GM12878 (cell line): ENCODE measurements at regions of chrX and their contacts with region 1.

Region 1: GRCh38 chrX:15854712-15855567 is at the start of gene AP1S2:
- DNase-seq: peak; percentile 90
- ATAC-seq: peak; percentile 94
- H3K4me3 ChIP-seq: peak within 1 kb of the TSS; percentile 90
- H3K27ac ChIP-seq: peak within 1 kb of the TSS; percentile 90
- H3K4me1 ChIP-seq: 0 out of 2 replicates have a peak, but pooled peaks cover 3% of the 10 kb centered on the region
- H3K27me3 ChIP-seq: no peaks in the 10 kb centered on the region
- CTCF ChIP-seq: no peak
- EP300 ChIP-seq: no peak; a peak in 1 of 4 replicates
- POLR2A ChIP-seq: peak; percentile 62
- RAD21 ChIP-seq: no peak
- polyA plus RNA-seq, gene AP1S2: 25.6 to 36.6 TPM

Region 2: GRCh38 chrX:15825936-15826335 is 29.0 kb before region 1 on chrX:
- CTCF ChIA-PET with region 1: no interaction called
- POLR2A ChIA-PET with region 1: no interaction called
- RAD21 ChIA-PET with region 1: no interaction called
- SMC1A ChIA-PET with region 1: no interaction called
- in situ Hi-C with region 1: no loop called
- intact Hi-C with region 1: no loop called
- DNase-seq: no peak
- ATAC-seq: no peak
- H3K4me3 ChIP-seq: no peak overlapping the region
- H3K27ac ChIP-seq: no peak overlapping the region
- H3K4me1 ChIP-seq: no peaks in the 10 kb centered on the region
- H3K27me3 ChIP-seq: no peaks in the 10 kb centered on the region
- CTCF ChIP-seq: no peak
- EP300 ChIP-seq: no peak
- POLR2A ChIP-seq: no peak
- RAD21 ChIP-seq: no peak

Region 3: DNA sequence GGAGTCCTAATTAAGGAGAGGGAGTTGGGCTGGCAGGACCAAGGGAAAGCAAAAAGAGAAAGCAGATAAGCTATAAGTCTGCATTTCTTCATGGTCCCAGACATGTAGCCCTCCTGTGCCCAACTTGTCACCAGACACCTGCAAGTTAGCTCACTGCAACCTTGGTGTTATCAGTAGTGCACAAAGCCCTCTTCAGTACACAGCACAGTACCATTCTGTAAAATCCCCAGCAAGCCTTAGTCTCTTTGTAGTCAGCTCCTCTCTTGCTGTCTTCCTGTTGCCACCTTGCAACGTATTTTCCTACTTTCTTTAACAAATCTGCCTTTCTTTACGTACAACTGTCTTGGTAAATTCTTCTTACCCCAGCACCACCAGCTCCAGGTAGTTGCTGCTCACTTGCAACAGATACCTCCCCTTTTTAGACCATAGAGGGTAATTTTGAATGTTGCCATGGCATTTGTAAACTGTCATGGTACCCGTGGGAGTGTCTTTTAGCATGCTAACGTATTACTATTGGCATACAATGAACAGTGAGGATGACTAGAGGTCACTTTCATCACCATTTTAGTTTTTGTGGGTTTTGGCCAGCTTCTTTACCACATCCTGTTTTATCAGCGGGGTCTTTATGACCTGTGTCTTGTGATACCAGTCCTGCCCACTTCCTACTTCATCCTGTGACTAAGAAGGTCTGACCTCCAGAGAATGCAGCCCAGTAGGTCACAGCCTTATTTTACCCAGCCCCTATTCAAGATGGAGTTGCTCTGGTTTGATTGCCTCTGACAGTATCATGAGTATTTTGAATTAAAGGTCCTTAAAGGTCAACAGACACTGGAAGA is 28.0 kb after region 1 on chrX:
- CTCF ChIA-PET with region 1: interaction called, 3 read pairs
- POLR2A ChIA-PET with region 1: no interaction called
- RAD21 ChIA-PET with region 1: interaction called, 3 read pairs
- SMC1A ChIA-PET with region 1: interaction called, 3 read pairs
- in situ Hi-C with region 1: no loop called
- intact Hi-C with region 1: loop called (anchors 2 kb)
- DNase-seq: peak; percentile 64
- ATAC-seq: peak; percentile 96
- H3K4me3 ChIP-seq: no peak overlapping the region
- H3K27ac ChIP-seq: no peak overlapping the region; the same call in 1 of the 2 replicates
- H3K4me1 ChIP-seq: peaks cover 10% of the 10 kb centered on the region
- H3K27me3 ChIP-seq: no peaks in the 10 kb centered on the region
- CTCF ChIP-seq: no peak
- EP300 ChIP-seq: peak; percentile 42 to 48; a peak in 2 of 4 replicates
- POLR2A ChIP-seq: no peak
- RAD21 ChIP-seq: no peak

Region 4: DNA sequence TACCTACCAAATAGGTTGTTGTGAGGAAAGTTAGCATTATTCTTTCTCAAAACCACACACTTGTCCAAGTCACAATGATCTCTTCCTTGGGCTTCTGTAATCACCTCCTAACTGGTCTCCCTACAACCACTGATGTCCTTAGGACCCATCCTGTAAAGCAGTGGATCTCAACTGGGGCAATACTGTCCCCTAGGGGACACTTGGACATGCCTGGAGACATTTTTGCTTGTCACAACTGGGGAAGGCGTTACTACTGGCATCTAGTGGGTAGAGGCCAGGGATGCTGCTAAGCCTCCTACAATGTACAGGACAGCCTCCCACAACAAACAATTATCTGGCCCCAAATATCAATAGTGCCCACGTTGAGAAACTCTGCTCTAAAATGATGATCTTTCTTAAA is 118.4 kb after region 1 on chrX:
- CTCF ChIA-PET with region 1: interaction called, 40 read pairs
- POLR2A ChIA-PET with region 1: interaction called, 5 read pairs
- RAD21 ChIA-PET with region 1: interaction called, 34 read pairs
- SMC1A ChIA-PET with region 1: interaction called, 33 read pairs
- in situ Hi-C with region 1: no loop called
- intact Hi-C with region 1: no loop called
- DNase-seq: peak; percentile 26
- ATAC-seq: peak; percentile 98
- H3K4me3 ChIP-seq: no peak overlapping the region
- H3K27ac ChIP-seq: no peak overlapping the region
- H3K4me1 ChIP-seq: no peaks in the 10 kb centered on the region; the same call in 1 of the 2 replicates
- H3K27me3 ChIP-seq: no peaks in the 10 kb centered on the region
- CTCF ChIP-seq: peak; percentile 71 to 81 (median 79)
- EP300 ChIP-seq: no peak
- POLR2A ChIP-seq: no peak
- RAD21 ChIP-seq: peak; percentile 86

Region 5: DNA sequence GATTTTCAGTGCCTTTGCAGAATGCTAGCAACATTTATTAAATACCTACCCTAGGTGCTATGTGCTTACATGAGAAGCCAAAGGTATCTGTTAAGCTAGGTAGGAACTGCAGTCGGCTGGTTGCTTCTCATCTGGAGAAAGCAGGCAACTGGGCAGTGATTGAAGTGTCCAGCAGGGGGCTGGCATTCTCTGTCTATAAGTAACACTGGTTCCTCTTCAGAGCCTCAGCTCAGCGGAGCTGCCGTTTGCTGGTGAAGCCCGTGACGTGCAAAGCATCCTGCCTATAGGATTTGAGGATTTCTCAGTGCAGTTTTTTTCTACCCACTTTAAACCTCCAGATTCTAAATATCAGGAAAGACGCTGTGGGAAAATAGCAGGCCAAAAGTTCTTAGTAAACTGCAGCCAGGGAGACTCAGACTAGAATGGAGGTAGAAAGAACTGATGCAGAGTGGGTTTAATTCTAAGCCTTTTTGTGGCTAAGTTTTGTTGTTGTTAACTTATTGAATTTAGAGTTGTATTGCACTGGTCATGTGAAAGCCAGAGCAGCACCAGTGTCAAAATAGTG is 268.4 kb after region 1 on chrX and contains the start of gene GRPR:
- CTCF ChIA-PET with region 1: interaction called, 7 read pairs
- POLR2A ChIA-PET with region 1: no interaction called
- RAD21 ChIA-PET with region 1: interaction called, 12 read pairs
- SMC1A ChIA-PET with region 1: interaction called, 3 read pairs
- in situ Hi-C with region 1: no loop called
- intact Hi-C with region 1: loop called (anchors 1 kb)
- DNase-seq: no peak
- ATAC-seq: peak; percentile 88
- H3K4me3 ChIP-seq: no peak within 1 kb of the TSS
- H3K27ac ChIP-seq: no peak within 1 kb of the TSS
- H3K4me1 ChIP-seq: peaks cover 15% of the 10 kb centered on the region
- H3K27me3 ChIP-seq: peaks cover 0 to 2% of the 10 kb centered on the region in 2 experiments; a peak in 1 of 4 replicates
- CTCF ChIP-seq: peak; percentile 76 to 83 (median 79)
- EP300 ChIP-seq: no peak
- POLR2A ChIP-seq: no peak
- RAD21 ChIP-seq: peak; percentile 61
- polyA plus RNA-seq, gene GRPR: 0.21 TPM in 1 of 2 experiments, not detected in the other

Region 6: GRCh38 chrX:16212436-16212835 is 357.5 kb after region 1 on chrX:
- CTCF ChIA-PET with region 1: interaction called, 18 read pairs
- POLR2A ChIA-PET with region 1: no interaction called
- RAD21 ChIA-PET with region 1: no interaction called
- SMC1A ChIA-PET with region 1: interaction called, 11 read pairs
- in situ Hi-C with region 1: no loop called
- intact Hi-C with region 1: loop called (anchors 10 kb)
- DNase-seq: no peak
- ATAC-seq: peak; percentile 84
- H3K4me3 ChIP-seq: no peak overlapping the region
- H3K27ac ChIP-seq: no peak overlapping the region
- H3K4me1 ChIP-seq: no peaks in the 10 kb centered on the region
- H3K27me3 ChIP-seq: no peaks in the 10 kb centered on the region
- CTCF ChIP-seq: peak; percentile 39 to 48 (median 45); a peak in 4 of 6 replicates
- EP300 ChIP-seq: no peak
- POLR2A ChIP-seq: no peak
- RAD21 ChIP-seq: peak; percentile 63